ENCODE measurements at regions of chr5 and their contacts with region 1.

Region 1: DNA sequence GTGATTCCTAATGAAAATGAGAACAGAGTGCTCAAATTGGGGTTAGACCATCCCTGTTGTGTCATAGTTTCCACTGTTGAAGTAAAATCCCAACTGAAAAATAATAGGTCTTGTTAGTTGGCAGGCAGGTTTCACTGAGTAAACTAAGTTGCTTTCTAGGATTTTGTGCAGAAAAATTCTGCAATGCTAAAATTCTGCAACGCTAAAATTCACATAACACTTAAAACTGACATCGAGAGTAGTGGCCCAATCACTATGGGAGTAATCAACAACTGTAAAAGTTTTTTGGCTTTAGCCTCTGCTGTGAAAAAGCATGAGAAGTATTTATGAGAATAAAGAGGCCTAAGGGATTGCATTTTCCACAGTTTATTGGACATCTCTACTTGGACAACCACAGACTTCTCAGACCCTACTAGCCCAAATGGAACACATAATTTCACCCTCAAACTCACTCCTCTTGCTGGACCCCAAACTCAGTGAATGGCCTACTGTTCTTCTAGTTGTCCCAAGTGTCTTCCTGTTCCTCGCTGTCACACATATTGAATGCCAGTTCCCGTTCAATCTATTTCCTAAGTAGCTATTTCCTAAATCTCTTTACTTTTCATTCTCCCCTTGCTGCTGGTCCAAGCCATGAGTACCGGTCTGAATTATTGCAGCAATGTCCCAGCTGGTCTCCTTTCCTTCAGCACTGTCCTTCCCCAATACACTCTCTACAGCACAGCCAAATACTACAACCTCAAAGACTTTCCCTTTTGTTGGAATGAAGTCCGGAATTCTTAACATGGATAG is 355.4 kb downstream of the PDE4D start:
- DNase-seq: no peak
- H3K4me3 ChIP-seq: no peak overlapping the region
- H3K27ac ChIP-seq: no peak overlapping the region
- H3K4me1 ChIP-seq: no peaks in the 10 kb centered on the region
- H3K27me3 ChIP-seq: no peaks in the 10 kb centered on the region
- CTCF ChIP-seq: no peak

Region 2: GRCh38 chr5:59328709-59329296 is 209.4 kb before region 1 on chr5:
- intact Hi-C with region 1: no loop called
- DNase-seq: no peak
- H3K4me3 ChIP-seq: no peak overlapping the region
- H3K27ac ChIP-seq: no peak overlapping the region
- H3K4me1 ChIP-seq: no peaks in the 10 kb centered on the region
- H3K27me3 ChIP-seq: no peaks in the 10 kb centered on the region
- CTCF ChIP-seq: no peak

Region 3: GRCh38 chr5:59348186-59348585 is 190.0 kb before region 1 on chr5:
- intact Hi-C with region 1: no loop called
- DNase-seq: no peak
- H3K4me3 ChIP-seq: no peak overlapping the region
- H3K27ac ChIP-seq: no peak overlapping the region
- H3K4me1 ChIP-seq: no peaks in the 10 kb centered on the region
- H3K27me3 ChIP-seq: no peaks in the 10 kb centered on the region
- CTCF ChIP-seq: no peak

Region 4: DNA sequence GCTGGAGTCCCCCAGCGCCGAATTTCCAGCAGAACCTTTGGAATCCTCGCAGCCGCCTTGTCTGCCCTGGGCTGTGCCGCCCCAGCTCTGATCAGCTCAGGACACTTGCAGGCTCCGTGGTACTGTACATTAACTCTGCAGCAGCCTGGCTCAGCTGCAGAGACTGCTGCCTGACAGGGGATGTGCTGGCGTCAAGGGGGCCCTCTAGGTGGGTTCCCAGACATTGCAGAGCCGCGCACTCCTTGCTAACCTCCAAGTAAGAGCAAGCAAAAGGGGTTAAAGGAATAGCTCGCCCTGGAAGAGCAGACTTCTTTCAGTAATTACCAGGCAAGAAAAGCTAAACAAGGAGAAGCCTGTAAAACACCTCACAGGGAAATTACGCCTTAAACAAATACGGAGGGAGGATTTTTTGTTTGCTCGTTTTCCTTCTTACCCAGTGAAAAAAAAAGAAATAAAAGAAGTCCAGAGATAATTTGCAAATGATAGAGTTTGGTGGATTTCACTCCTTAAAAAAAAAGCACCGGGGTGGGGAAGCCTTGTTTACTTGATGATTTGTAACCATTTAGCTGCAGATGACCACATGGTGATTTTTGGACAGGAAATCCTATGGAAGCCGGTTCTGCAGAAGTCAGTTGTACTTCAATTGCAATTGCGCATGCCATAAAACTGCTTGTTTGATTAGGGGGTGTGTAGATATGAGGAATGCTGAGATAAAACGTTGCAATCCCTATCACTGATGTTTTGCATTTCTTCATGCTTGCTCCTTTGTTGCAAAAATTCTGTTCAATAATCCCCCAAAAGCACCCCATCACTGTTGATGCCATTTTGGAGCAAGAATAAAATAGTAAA is 49.6 kb after region 1 on chr5:
- intact Hi-C with region 1: loop called (anchors 10 kb)
- DNase-seq: peak; percentile 85
- H3K4me3 ChIP-seq: peak overlapping the region; percentile 35
- H3K27ac ChIP-seq: peak overlapping the region; percentile 61
- H3K4me1 ChIP-seq: peaks cover 11% of the 10 kb centered on the region
- H3K27me3 ChIP-seq: no peaks in the 10 kb centered on the region
- CTCF ChIP-seq: no peak

Measured in colonic mucosa (tissue), 4 donors.